Endothelial cell of umbilical vein (primary cell): ENCODE measurements at regions of chr15 and their contacts with region 1.

Region 1: DNA sequence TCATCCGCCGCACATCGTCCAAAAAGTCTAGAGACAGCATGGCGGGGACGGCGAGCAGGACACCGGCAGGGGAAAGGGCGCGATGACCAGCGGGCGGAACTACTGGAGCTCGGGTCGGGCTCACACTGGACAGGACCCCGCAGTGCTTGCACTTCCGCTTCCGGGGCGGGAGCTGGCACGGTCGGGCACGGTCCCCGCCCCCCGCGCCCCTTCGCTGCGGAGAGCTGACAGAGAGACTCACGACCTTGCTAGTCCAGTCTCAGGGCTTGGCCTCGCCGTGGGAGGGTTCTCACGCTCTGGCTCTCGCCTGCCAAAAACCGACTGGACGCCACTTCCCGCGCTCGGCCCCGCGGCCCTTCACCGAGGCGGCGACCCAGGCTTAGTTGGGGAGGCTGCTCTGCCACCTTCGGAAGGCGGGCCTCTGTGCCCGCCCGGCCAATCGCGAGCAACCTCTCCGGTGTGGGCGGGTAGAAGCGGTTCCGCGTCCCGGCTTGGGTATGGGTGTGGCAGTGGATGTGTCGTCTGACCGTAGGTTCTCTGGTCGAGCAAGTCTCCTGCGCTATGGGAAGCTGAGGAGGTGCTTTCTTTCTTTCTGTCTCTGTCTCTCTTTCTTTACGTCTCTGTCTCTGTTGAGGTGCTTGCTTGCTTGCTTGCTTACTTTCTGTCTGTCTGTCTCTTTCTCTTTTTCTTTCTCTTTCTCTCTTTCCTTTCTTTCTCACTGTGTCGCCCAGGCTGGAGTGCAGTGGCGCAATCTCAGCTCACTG is at the start of gene SEC11A:
- DNase-seq: peak; percentile 97
- H3K4me3 ChIP-seq: peak within 1 kb of the TSS; percentile 55 to 95 (median 85)
- H3K27ac ChIP-seq: peak within 1 kb of the TSS; percentile 56
- H3K4me1 ChIP-seq: peaks cover 22% of the 10 kb centered on the region
- H3K27me3 ChIP-seq: no peaks in the 10 kb centered on the region
- CTCF ChIP-seq: no peak
- POLR2A ChIP-seq: peak; percentile 97
- total RNA-seq, gene SEC11A: 192 and 204 TPM in 2 replicates

Region 2: DNA sequence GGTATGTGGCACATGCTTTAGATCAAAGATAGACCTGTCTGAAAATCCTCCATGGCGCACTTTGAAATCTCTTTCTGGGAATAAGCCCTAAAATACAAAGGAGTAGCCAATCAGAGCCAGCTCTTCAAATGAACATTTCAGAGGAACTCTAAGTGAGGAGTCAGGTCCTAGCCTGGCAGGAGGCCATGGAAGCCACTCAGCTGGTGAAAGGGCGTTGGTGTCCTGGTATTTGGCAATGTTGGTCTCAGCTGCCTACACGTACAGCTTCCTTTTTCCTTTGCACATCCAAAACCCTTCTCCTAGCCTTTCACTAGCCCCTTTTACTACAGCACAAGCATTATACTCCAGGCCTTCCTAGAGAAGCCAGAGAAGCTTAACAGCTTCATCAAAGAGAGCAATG is 67.7 kb before region 1 on chr15:
- CTCF ChIA-PET with region 1: no interaction called
- POLR2A ChIA-PET with region 1: no interaction called
- dilution Hi-C with region 1: no loop called
- intact Hi-C with region 1: no loop called
- DNase-seq: no peak
- H3K4me3 ChIP-seq: no peak overlapping the region
- H3K27ac ChIP-seq: no peak overlapping the region
- H3K4me1 ChIP-seq: peaks cover 14% of the 10 kb centered on the region
- H3K27me3 ChIP-seq: no peaks in the 10 kb centered on the region
- CTCF ChIP-seq: no peak
- POLR2A ChIP-seq: no peak

Region 3: GRCh38 chr15:84734794-84735479 is 18.7 kb after region 1 on chr15:
- CTCF ChIA-PET with region 1: no interaction called
- POLR2A ChIA-PET with region 1: no interaction called
- dilution Hi-C with region 1: no loop called
- intact Hi-C with region 1: no loop called
- DNase-seq: no peak
- H3K4me3 ChIP-seq: no peak overlapping the region
- H3K27ac ChIP-seq: no peak overlapping the region
- H3K4me1 ChIP-seq: no peaks in the 10 kb centered on the region
- H3K27me3 ChIP-seq: no peaks in the 10 kb centered on the region
- CTCF ChIP-seq: no peak
- POLR2A ChIP-seq: no peak

Region 4: GRCh38 chr15:84755736-84756527 is 39.7 kb after region 1 on chr15:
- CTCF ChIA-PET with region 1: no interaction called
- POLR2A ChIA-PET with region 1: no interaction called
- dilution Hi-C with region 1: no loop called
- intact Hi-C with region 1: no loop called
- DNase-seq: no peak
- H3K4me3 ChIP-seq: no peak overlapping the region
- H3K27ac ChIP-seq: no peak overlapping the region
- H3K4me1 ChIP-seq: peaks cover 8% of the 10 kb centered on the region
- H3K27me3 ChIP-seq: no peaks in the 10 kb centered on the region
- CTCF ChIP-seq: no peak
- POLR2A ChIP-seq: no peak

Region 5: GRCh38 chr15:84773716-84774115 is 57.5 kb after region 1 on chr15:
- CTCF ChIA-PET with region 1: no interaction called
- POLR2A ChIA-PET with region 1: no interaction called
- dilution Hi-C with region 1: no loop called
- intact Hi-C with region 1: loop called (anchors 2 kb)
- DNase-seq: no peak
- H3K4me3 ChIP-seq: no peak overlapping the region
- H3K27ac ChIP-seq: no peak overlapping the region
- H3K4me1 ChIP-seq: peaks cover 19% of the 10 kb centered on the region
- H3K27me3 ChIP-seq: no peaks in the 10 kb centered on the region
- CTCF ChIP-seq: no peak
- POLR2A ChIP-seq: no peak

Region 6: GRCh38 chr15:84818261-84819131 is 102.3 kb after region 1 on chr15:
- CTCF ChIA-PET with region 1: interaction called, 3 read pairs
- POLR2A ChIA-PET with region 1: interaction called, 3 read pairs
- dilution Hi-C with region 1: no loop called
- intact Hi-C with region 1: loop called (anchors 1 kb)
- DNase-seq: peak; percentile 91
- H3K4me3 ChIP-seq: peak overlapping the region in 2 of 3 experiments; percentile 57 to 58
- H3K27ac ChIP-seq: peak overlapping the region; percentile 88
- H3K4me1 ChIP-seq: peaks cover 42% of the 10 kb centered on the region
- H3K27me3 ChIP-seq: no peaks in the 10 kb centered on the region
- CTCF ChIP-seq: peak in 1 of 2 donors; percentile 2
- POLR2A ChIP-seq: peak; percentile 71

Region 7: DNA sequence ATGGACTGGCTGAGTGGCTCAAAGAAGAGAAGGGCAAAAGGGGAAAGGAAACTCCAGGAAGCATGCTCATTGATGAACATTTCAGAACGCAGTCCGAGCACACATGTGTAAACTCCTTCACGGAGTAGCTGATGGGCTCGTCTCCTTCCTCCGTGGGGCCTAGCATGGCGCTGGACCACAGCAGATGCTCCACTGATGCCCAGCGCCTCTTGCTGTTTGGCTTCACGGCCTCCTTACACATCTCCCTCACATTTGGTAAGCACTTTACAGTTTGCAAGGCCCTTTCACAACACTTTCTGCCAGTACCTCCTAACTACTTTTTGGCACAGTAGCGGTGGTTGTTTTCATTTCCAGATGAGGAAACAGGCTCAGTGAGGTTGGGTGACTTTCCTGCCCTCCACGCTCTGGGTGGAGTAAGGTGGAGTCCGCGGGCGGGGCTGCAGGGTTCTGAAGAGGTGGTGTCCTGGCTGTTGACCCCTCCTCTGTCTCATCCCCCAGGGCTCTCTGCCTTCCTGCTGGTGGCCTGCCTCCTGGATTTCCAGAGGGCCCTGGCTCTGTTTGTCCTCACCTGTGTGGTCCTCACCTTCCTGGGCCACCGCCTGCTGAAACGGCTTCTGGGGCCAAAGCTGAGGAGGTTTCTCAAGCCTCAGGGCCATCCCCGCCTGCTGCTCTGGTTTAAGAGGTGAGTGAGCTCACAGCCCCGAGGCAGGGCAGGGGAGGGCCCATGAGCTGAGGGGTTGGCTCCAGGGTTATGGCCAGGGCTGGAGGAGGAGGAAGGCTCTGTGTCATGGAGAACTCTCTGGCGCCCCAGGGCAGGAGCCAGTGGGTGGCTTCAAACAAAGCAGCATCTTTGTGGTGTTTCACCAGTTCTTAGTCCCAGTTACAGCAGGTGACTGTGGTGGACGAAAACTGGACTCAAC is 178.5 kb after region 1 on chr15:
- CTCF ChIA-PET with region 1: no interaction called
- POLR2A ChIA-PET with region 1: no interaction called
- dilution Hi-C with region 1: no loop called
- intact Hi-C with region 1: no loop called
- DNase-seq: no peak
- H3K4me3 ChIP-seq: no peak overlapping the region
- H3K27ac ChIP-seq: no peak overlapping the region
- H3K4me1 ChIP-seq: no peaks in the 10 kb centered on the region
- H3K27me3 ChIP-seq: peaks cover 4 to 6% of the 10 kb centered on the region in 2 experiments
- CTCF ChIP-seq: no peak
- POLR2A ChIP-seq: no peak